ENCODE measurements at regions of chr6 and their contacts with region 1.

Region 1: DNA sequence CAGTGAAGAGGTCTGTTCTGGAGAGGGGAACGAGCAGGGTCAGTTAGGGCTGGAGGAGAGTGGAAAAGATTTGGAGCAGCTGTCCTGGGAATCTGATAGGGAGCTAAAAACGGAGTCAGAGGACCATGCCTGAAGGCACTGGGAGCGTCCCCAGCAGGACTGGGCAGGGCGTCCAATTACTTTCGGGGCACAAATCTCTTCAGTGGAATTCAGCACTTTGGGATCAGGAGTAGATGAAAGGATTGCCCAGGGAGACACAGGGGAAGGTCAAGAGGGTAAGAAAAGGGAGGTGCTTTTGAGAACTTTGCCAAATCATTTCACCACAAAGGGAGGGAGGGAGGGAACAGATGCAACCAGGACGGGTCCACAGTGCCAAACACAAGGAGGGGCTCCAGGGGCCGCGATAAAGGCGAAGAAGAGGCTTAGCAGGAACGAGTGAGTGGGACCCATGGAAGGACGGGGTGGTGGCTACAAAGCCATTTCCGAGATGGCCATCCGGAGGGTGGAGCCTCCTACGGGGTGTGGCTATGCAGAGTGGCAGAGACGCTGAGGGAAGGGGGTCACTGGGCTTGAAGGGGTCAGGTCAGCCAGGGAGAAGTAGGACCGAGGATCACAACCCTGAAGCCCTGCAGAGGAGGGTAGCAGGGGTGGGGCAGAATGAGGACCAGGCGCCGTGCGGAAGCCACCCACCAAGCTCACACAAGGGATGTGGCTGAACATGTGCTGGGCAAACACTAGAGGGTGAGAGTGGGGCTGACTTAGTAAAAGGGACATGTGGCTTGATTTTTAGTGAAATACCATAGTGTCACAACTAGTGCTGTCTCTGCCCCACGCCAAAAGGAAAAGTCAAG is 180.0 kb upstream of the RREB1 start:
- DNase-seq: peak; percentile 65 to 86
- ATAC-seq: peak; percentile 74 to 82 (median 80)
- H3K4me3 ChIP-seq: peak overlapping the region; percentile 60
- H3K27ac ChIP-seq: peak overlapping the region; percentile 93
- H3K4me1 ChIP-seq: peaks cover 31% of the 10 kb centered on the region
- H3K27me3 ChIP-seq: no peaks in the 10 kb centered on the region
- CTCF ChIP-seq: peak; percentile 31

Region 2: DNA sequence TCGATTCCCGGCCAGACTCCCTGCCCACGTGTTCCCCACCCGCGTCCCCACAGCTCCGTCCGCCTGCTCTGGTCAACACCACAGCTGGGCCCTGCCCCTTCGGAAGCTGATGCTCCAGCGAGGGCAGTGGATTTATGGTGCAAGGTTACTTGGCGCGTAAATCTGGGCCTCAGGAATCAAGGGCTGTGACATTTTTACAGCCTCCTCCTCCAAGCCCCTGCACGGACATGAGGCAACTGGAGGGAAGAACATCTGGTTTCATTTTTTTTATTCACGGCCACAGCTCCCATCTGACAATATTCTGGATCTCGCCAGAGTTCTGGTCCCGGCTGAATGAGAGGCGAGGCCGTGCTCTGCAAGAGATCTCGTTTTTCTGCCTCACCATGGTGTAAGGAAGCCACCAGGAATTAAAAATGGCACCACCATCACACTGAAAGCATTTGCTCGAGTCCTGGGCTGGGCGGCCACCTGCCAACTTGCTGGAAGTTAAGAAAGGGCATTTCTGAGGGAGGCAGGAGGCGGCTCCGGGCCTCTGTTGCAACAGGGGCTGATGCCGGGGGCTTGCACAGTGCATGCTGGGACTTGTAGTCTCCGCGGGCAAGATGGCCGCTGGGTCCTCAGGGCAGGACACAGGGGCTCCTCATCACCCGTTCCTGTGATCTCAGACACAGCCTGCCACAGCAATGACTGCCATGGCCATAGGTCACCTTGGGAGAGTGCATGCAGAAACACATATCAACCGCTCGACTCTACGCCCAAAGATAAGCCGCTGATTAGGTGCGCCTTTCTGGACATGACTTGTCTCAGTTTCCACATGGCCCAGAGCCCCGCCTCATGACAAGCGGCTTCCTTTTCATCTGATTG is 190.7 kb before region 1 on chr6:
- intact Hi-C with region 1: loop called in 1 of 2 experiments (anchors 5 kb)
- DNase-seq: peak; percentile 91 to 97
- ATAC-seq: peak; percentile 91 to 96 (median 94)
- H3K4me3 ChIP-seq: peak overlapping the region; percentile 60
- H3K27ac ChIP-seq: peak overlapping the region; percentile 86
- H3K4me1 ChIP-seq: peaks cover 38% of the 10 kb centered on the region
- H3K27me3 ChIP-seq: no peaks in the 10 kb centered on the region
- CTCF ChIP-seq: no peak

Region 3: DNA sequence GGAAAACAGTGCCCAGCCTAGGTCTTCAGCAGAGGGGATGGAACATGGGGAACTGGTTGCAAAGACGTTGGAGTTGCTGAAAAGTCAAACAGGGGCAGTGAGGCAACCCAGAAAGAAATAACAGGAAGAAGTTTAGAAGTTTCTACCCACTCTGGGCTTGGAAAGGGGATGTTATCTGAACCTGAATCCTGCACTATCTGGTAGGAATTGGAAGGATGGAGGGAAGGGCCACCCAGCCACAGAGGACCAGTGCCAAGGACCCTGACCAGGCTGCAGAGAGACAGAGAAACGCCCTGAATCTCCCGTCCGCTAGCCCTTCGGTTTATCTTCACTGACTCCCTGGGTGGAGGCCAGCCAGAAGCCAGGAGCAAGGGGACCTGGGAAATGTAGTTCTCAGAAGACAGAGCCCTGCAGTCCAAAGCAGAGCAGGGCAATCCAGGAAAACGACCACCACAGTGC is 37.3 kb before region 1 on chr6:
- intact Hi-C with region 1: loop called in 1 of 2 experiments (anchors 5 kb)
- DNase-seq: peak; percentile 54 to 76
- ATAC-seq: no peak
- H3K4me3 ChIP-seq: peak overlapping the region; percentile 7
- H3K27ac ChIP-seq: peak overlapping the region; percentile 92
- H3K4me1 ChIP-seq: peaks cover 51% of the 10 kb centered on the region
- H3K27me3 ChIP-seq: no peaks in the 10 kb centered on the region
- CTCF ChIP-seq: no peak

Region 4: GRCh38 chr6:6975459-6976111 is 47.8 kb after region 1 on chr6:
- intact Hi-C with region 1: loop called in 1 of 2 experiments (anchors 2 kb)
- DNase-seq: peak; percentile 26 to 76
- ATAC-seq: peak; percentile 94 to 95 (median 94)
- H3K4me3 ChIP-seq: no peak overlapping the region
- H3K27ac ChIP-seq: peak overlapping the region; percentile 92
- H3K4me1 ChIP-seq: peaks cover 21% of the 10 kb centered on the region
- H3K27me3 ChIP-seq: no peaks in the 10 kb centered on the region
- CTCF ChIP-seq: no peak

Region 5: DNA sequence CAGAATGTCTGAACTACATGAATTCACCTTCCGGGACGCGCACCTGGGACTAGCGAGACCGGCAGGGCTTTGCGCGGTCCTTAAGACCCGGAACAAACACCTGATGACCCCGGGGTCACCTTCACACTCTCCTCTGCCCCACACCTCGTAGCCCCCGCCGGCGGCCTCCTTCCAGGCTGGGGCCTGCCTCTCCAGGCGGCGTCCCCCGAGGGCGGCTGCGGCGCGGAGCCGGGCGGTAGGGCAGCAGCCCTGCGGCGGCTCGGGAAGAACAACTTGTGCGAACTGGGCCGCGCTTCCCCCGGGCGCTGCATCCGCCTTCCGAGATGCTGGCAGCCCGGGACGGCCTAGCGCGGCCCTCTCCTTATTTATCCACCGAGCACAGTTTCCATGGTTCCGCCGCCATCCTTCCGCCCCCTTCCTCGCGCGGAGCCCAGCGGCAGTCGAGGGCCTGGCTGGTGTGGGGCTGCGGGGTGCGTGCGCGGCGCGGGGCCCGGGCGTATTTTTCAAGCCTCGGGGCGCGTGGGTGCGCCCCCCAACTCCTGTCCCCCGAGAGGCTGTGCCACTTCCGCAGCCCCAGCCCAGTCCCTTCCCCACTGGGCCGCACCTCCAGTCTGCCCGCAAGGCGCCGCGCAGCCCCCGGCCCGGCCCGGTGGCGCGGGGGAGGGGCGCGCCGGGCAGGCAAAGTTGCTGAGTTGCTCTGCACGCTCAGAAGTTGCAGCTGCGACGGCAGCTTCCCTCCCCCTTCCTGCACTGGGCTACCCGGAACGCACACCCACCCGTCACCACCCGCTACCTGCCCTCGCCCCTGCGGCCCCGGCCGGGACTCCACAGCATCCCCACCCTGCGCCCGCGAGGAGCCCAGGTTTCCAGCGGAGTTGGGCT is 123.7 kb after region 1 on chr6:
- intact Hi-C with region 1: loop called (anchors 5 to 10 kb)
- DNase-seq: peak; percentile 61 to 81
- ATAC-seq: peak; percentile 76 to 79 (median 78)
- H3K4me3 ChIP-seq: peak overlapping the region; percentile 70
- H3K27ac ChIP-seq: peak overlapping the region; percentile 96
- H3K4me1 ChIP-seq: peaks cover 3% of the 10 kb centered on the region
- H3K27me3 ChIP-seq: no peaks in the 10 kb centered on the region
- CTCF ChIP-seq: no peak

Region 6: DNA sequence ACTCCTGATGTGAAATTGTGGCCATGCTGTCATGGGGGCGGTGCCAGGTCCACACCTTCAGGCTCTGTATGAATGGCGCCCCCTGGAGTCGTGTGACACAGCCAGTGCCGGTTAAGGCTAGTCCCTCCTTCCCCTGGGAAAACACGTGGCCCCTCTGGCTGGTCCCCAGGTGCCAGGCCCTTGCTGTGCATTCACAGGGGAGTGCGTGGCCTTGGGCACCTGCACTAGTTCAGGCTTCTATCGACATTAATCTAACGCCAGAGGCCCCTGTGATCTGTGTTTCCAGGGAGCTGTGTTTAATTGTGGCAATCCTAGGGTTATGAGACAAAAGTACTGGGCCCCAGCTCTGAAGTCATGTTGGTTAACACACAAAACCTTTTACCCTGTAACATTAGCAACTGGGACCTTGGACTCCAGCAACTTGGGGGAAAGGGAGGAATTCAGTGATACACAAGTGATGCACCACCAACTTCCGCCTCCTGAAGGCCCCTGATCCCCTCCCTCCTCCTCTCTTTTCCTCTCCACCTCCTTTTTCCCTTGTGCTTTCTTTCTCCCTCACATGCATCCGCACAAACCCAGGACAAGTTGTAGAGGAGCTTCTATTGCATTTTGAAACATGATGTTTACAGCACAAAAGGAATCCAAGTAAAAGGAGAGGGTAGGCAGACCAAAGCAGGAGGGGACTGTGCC is 311.3 kb after region 1 on chr6:
- intact Hi-C with region 1: loop called in 1 of 2 experiments (anchors 10 kb)
- DNase-seq: peak; percentile 90 to 95
- ATAC-seq: peak; percentile 87 to 91 (median 89)
- H3K4me3 ChIP-seq: no peak overlapping the region
- H3K27ac ChIP-seq: peak overlapping the region; percentile 71
- H3K4me1 ChIP-seq: peaks cover 38% of the 10 kb centered on the region
- H3K27me3 ChIP-seq: no peaks in the 10 kb centered on the region
- CTCF ChIP-seq: peak; percentile 64